SK-N-SH (cell line): ENCODE measurements at regions of chr6 and their contacts with region 1.

Region 1: GRCh38 chr6:40295251-40295949 is 291.8 kb downstream of the LRFN2 start:
- DNase-seq: no peak
- H3K4me3 ChIP-seq: no peak overlapping the region
- H3K27ac ChIP-seq: no peak overlapping the region
- H3K4me1 ChIP-seq: peaks cover 0 to 7% of the 10 kb centered on the region in 2 experiments; a peak in 1 of 4 replicates
- H3K27me3 ChIP-seq: no peaks in the 10 kb centered on the region
- CTCF ChIP-seq: no peak
- EP300 ChIP-seq: no peak
- RAD21 ChIP-seq: no peak

Region 2: GRCh38 chr6:40308533-40309306 is 13.3 kb after region 1 on chr6:
- CTCF ChIA-PET with region 1: interaction called, 19 read pairs
- POLR2A ChIA-PET with region 1: no interaction called
- DNase-seq: peak; percentile 82
- H3K4me3 ChIP-seq: no peak overlapping the region
- H3K27ac ChIP-seq: no peak overlapping the region
- H3K4me1 ChIP-seq: peaks cover 0 to 4% of the 10 kb centered on the region in 2 experiments; a peak in 1 of 4 replicates
- H3K27me3 ChIP-seq: no peaks in the 10 kb centered on the region
- CTCF ChIP-seq: peak; percentile 65
- EP300 ChIP-seq: no peak
- RAD21 ChIP-seq: peak; percentile 77

Region 3: GRCh38 chr6:40356242-40356910 is 61.0 kb after region 1 on chr6:
- CTCF ChIA-PET with region 1: no interaction called
- POLR2A ChIA-PET with region 1: no interaction called
- DNase-seq: no peak
- H3K4me3 ChIP-seq: no peak overlapping the region
- H3K27ac ChIP-seq: peak overlapping the region in 1 of 2 experiments; percentile 39; a peak in 1 of 4 replicates
- H3K4me1 ChIP-seq: no peaks in the 10 kb centered on the region; a peak in 1 of 4 replicates
- H3K27me3 ChIP-seq: no peaks in the 10 kb centered on the region
- CTCF ChIP-seq: no peak
- EP300 ChIP-seq: no peak
- RAD21 ChIP-seq: no peak